GM12878 (cell line): ENCODE measurements at regions of chr5 and their contacts with region 1.

Region 1: GRCh38 chr5:173795601-173796300 is 92.4 kb upstream of the CPEB4 start:
- DNase-seq: no peak
- ATAC-seq: no peak
- H3K4me3 ChIP-seq: no peak overlapping the region
- H3K27ac ChIP-seq: no peak overlapping the region
- H3K4me1 ChIP-seq: peaks cover 7% of the 10 kb centered on the region
- H3K27me3 ChIP-seq: no peaks in the 10 kb centered on the region
- CTCF ChIP-seq: no peak
- EP300 ChIP-seq: no peak
- POLR2A ChIP-seq: no peak
- RAD21 ChIP-seq: no peak

Region 2: DNA sequence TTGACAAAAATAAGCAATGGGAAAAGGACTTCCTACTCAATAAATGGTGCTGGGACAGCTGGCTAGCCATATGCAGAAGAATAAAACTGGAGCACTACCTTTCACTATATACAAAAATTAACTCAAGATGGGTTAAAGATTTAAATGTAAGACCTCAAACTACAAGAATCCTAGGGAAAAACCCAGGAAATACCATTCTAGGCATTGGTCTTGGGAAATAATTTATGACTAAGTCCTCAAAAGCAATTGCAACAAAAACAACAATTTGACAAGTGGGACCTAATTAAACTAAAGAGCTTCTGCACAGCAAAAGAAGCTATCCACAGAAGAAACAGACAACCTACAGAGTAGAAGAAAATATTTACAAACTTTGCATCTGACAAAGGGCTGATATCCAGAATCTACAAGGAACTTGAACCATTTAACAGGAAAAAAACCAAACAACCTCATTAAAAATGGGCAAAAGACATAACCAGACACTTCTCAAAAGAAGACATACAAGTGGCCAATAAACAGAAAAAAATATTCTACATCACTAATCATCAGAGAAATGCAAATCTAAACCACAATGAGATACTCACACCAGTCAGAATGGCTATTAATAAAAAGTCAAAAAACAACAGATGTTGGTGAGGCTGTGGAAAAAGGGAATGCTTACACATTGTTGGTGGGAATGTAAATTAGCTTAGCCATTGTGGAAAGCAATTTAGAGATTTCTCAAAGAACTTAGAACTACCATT is 17.2 kb after region 1 on chr5:
- CTCF ChIA-PET with region 1: interaction called, 87 read pairs
- POLR2A ChIA-PET with region 1: interaction called, 3 read pairs
- RAD21 ChIA-PET with region 1: no interaction called
- SMC1A ChIA-PET with region 1: interaction called, 271 read pairs
- in situ Hi-C with region 1: no loop called
- intact Hi-C with region 1: no loop called
- DNase-seq: no peak
- ATAC-seq: peak; percentile 63
- H3K4me3 ChIP-seq: no peak overlapping the region
- H3K27ac ChIP-seq: no peak overlapping the region; the same call in 1 of the 2 replicates
- H3K4me1 ChIP-seq: peaks cover 9% of the 10 kb centered on the region; the same call in 1 of the 2 replicates
- H3K27me3 ChIP-seq: no peaks in the 10 kb centered on the region
- CTCF ChIP-seq: no peak
- EP300 ChIP-seq: no peak
- POLR2A ChIP-seq: no peak
- RAD21 ChIP-seq: no peak